ENCODE measurements at regions of chr10 and their contacts with region 1.

Region 1: DNA sequence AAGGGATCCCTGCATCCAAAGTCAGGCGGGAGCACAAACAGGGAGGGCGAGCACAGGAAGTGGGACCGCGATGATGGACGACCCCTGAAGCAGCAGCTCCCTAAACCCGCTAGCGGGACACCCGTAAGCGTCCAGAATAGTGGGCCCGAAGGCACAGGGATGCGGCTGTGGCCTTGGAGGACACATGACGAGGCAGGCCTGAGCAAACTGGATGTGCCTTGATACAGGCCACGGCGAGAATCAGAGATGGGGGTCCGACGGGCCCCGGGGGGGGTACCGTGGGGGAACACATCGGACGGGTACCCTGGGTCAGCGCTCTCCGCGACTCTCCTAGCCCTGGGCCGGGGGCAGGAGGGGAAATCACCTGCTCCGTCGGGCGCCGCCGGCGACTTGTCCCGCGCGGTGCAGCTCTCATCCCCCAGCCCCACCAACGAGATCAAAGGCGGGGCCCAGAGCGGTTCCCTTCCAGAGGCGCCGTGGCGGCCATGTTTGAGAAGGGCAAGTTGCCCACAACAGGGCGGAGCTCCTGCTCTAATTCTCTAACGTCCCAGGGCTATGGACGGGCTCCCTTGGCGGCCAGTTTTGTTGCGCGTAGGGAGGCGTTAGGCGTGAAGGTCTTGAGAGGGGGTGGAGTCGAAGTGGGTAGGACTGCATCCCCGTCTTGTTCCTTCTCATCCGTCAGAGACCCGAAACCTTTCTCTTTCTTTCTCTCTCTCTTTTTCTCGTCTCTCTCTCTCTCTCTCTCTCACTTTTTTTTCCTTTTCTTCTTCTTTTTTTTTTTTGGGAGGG is at the start of gene CUEDC2:
- DNase-seq: peak; percentile 99
- ATAC-seq: peak; percentile 94
- H3K4me3 Mint-ChIP-seq: peak within 1 kb of the TSS; percentile 85
- H3K27ac Mint-ChIP-seq: peak within 1 kb of the TSS; percentile 94
- H3K4me1 Mint-ChIP-seq: peaks cover 42% of the 10 kb centered on the region
- H3K27me3 Mint-ChIP-seq: no peaks in the 10 kb centered on the region
- total RNA-seq, gene CUEDC2: 60.8 to 72.7 TPM

Region 2: GRCh38 chr10:102399217-102400089 is 32.9 kb before region 1 on chr10:
- CTCF ChIA-PET with region 1: interaction called, 5 read pairs
- POLR2A ChIA-PET with region 1: interaction called, 5 read pairs
- intact Hi-C with region 1: loop called (anchors 1 to 5 kb)
- DNase-seq: peak; percentile 94
- ATAC-seq: peak; percentile 60
- H3K4me3 Mint-ChIP-seq: peak overlapping the region; percentile 95
- H3K27ac Mint-ChIP-seq: peak overlapping the region; percentile 98
- H3K4me1 Mint-ChIP-seq: peaks cover 41% of the 10 kb centered on the region
- H3K27me3 Mint-ChIP-seq: no peaks in the 10 kb centered on the region

Region 3: DNA sequence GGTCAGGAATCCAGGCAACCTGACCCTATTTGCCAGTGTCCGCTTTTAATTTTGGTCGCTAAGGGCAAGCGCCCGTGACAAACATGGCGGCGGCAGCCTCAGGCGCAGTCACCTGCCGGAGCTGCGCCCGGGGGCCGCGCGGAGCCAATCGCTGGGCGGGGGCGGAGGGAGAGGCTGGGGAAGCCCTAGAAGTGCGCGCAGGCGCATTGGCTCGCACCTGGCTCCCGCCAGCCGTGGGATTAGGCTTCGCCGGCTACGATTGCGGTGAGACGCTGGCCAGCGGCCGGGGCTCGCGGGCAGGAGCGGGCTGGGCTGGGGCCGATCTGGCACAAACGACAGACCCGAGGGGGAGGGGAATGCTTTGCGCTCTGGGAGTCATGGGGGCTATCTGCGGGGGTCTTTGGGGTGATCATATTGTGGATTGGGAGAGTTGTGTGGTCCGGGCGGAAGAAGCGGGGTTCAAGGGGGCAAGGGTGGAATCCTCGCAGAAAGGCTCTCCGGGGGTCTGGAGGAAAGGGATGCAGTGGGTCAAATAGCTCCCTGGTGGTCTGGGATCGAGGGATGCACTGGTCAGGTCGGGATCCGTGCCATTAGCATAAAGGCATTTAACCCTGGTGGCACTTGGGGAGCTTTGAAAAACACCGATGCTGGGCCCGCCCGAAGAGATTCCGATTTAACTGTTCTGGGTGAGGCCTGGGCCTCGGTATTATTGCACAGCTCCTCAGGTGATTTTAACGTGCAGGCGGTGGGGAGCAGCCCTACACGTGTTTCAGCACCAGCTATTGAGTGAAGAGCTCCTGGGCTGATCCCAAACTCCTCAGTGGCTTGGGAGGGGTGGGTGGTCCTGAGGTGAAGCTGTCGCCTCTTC is 29.1 kb after region 1 on chr10:
- CTCF ChIA-PET with region 1: interaction called, 7 read pairs
- POLR2A ChIA-PET with region 1: interaction called, 5 read pairs
- intact Hi-C with region 1: loop called in 1 of 2 experiments (anchors 1 kb)
- DNase-seq: peak; percentile 97
- ATAC-seq: peak; percentile 98
- H3K4me3 Mint-ChIP-seq: peak overlapping the region; percentile 85
- H3K27ac Mint-ChIP-seq: peak overlapping the region; percentile 73
- H3K4me1 Mint-ChIP-seq: peaks cover 27% of the 10 kb centered on the region
- H3K27me3 Mint-ChIP-seq: no peaks in the 10 kb centered on the region